ENCODE measurements at regions of chr19 and their contacts with region 1.

Region 1: DNA sequence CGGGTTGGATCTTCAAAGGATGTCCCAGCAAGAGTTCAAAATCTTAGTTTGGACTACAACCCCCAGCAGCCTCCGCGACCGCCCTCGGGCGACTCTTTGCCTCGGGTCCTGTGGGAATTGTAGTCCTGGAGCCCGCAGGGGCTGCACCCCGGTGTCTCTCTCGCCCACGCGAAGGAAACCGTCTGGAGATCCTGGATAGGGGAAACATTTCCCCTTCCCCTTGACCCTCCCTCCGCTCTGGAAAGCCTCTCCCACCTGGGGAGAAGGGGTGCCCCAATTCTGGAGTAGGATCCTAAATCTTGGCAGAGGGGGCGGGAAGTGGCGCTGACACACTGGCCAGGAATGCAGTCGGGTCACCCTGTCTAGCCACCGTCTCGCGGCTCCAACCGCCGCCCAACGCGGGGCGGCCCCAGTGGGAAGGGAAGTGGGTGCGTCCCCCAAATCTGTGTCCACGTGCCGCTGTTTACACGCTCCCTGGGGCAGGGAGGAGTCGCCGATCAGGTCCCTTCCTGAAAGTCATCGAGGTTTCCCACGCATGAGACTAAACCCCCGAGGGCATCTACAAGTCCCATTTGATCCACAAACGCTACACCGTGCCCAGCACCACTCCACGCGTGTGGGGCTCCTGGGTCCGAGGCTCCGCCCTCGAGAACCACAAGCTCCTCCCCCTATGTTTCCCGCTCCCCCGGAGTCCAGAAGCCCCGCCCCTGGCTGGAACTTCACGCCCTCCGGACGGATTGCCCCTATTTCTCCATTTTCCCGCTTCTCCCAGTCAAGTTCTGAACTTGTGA is 761 bp upstream of the PPP1R13L start:
- DNase-seq: peak; percentile 94 to 97
- ATAC-seq: peak; percentile 59 to 71
- H3K4me3 ChIP-seq: peak overlapping the region; percentile 66
- H3K27ac ChIP-seq: peak overlapping the region; percentile 94 to 96
- H3K4me1 ChIP-seq: peaks cover 39% of the 10 kb centered on the region
- CTCF ChIP-seq: no peak
- EP300 ChIP-seq: no peak
- POLR2A ChIP-seq: peak; percentile 12; the same call in 1 of the 2 replicates
- RAD21 ChIP-seq: no peak

Region 2: GRCh38 chr19:45370410-45371204 is 35.0 kb before region 1 on chr19 and contains the start of gene ERCC2:
- CTCF ChIA-PET with region 1: interaction called, 26 read pairs
- POLR2A ChIA-PET with region 1: no interaction called
- DNase-seq: peak; percentile 98 to 99
- ATAC-seq: peak; percentile 99 to 100
- H3K4me3 ChIP-seq: peak within 1 kb of the TSS; percentile 60
- H3K27ac ChIP-seq: peak within 1 kb of the TSS; percentile 71 to 93
- H3K4me1 ChIP-seq: no peaks in the 10 kb centered on the region; the same call in 2 of the 3 replicates
- CTCF ChIP-seq: no peak
- EP300 ChIP-seq: no peak
- POLR2A ChIP-seq: peak; percentile 3; the same call in 1 of the 2 replicates
- RAD21 ChIP-seq: no peak
- polyA plus RNA-seq, gene ERCC2: 12.9 and 15.0 TPM in 2 replicates

Region 3: GRCh38 chr19:45385392-45386221 is 20.0 kb before region 1 on chr19:
- CTCF ChIA-PET with region 1: interaction called, 94 read pairs
- POLR2A ChIA-PET with region 1: no interaction called
- DNase-seq: no peak
- ATAC-seq: peak in 1 of 2 experiments; percentile 15; a peak in 3 of 6 replicates
- H3K4me3 ChIP-seq: no peak overlapping the region
- H3K27ac ChIP-seq: no peak overlapping the region
- H3K4me1 ChIP-seq: no peaks in the 10 kb centered on the region
- CTCF ChIP-seq: no peak
- EP300 ChIP-seq: no peak
- POLR2A ChIP-seq: no peak
- RAD21 ChIP-seq: no peak

Region 4: GRCh38 chr19:45423589-45424190 is 18.1 kb after region 1 on chr19 and contains the start of gene ERCC1:
- CTCF ChIA-PET with region 1: interaction called, 73 read pairs
- POLR2A ChIA-PET with region 1: interaction called, 6 read pairs
- DNase-seq: peak; percentile 98
- ATAC-seq: peak; percentile 77 to 87
- H3K4me3 ChIP-seq: peak within 1 kb of the TSS; percentile 58
- H3K27ac ChIP-seq: peak within 1 kb of the TSS; percentile 93 to 95
- H3K4me1 ChIP-seq: peaks cover 31% of the 10 kb centered on the region
- CTCF ChIP-seq: no peak
- EP300 ChIP-seq: peak in 1 of 2 experiments; percentile 10; a peak in 1 of 5 replicates
- POLR2A ChIP-seq: peak; percentile 84
- RAD21 ChIP-seq: no peak
- polyA plus RNA-seq, gene ERCC1: 81.7 and 109 TPM in 2 replicates

Region 5: GRCh38 chr19:45469132-45469944 is 63.7 kb after region 1 on chr19:
- CTCF ChIA-PET with region 1: interaction called, 10 read pairs
- POLR2A ChIA-PET with region 1: interaction called, 4 read pairs
- DNase-seq: peak; percentile 78 to 94
- ATAC-seq: peak; percentile 58 to 63
- H3K4me3 ChIP-seq: peak overlapping the region; percentile 58
- H3K27ac ChIP-seq: peak overlapping the region; percentile 55 to 86
- H3K4me1 ChIP-seq: peaks cover 24% of the 10 kb centered on the region
- CTCF ChIP-seq: no peak
- EP300 ChIP-seq: no peak
- POLR2A ChIP-seq: peak; percentile 28; the same call in 1 of the 2 replicates
- RAD21 ChIP-seq: no peak

Region 6: GRCh38 chr19:45485305-45486077 is 79.9 kb after region 1 on chr19:
- CTCF ChIA-PET with region 1: interaction called, 99 read pairs
- POLR2A ChIA-PET with region 1: interaction called, 5 read pairs
- DNase-seq: peak; percentile 94 to 97
- ATAC-seq: peak; percentile 92 to 97
- H3K4me3 ChIP-seq: peak overlapping the region; percentile 63
- H3K27ac ChIP-seq: peak overlapping the region; percentile 76 to 92
- H3K4me1 ChIP-seq: peaks cover 5% of the 10 kb centered on the region
- CTCF ChIP-seq: peak; percentile 63
- EP300 ChIP-seq: no peak
- POLR2A ChIP-seq: no peak
- RAD21 ChIP-seq: peak; percentile 65 to 71